ENCODE measurements at regions of chr7 and their contacts with region 1.

Region 1: DNA sequence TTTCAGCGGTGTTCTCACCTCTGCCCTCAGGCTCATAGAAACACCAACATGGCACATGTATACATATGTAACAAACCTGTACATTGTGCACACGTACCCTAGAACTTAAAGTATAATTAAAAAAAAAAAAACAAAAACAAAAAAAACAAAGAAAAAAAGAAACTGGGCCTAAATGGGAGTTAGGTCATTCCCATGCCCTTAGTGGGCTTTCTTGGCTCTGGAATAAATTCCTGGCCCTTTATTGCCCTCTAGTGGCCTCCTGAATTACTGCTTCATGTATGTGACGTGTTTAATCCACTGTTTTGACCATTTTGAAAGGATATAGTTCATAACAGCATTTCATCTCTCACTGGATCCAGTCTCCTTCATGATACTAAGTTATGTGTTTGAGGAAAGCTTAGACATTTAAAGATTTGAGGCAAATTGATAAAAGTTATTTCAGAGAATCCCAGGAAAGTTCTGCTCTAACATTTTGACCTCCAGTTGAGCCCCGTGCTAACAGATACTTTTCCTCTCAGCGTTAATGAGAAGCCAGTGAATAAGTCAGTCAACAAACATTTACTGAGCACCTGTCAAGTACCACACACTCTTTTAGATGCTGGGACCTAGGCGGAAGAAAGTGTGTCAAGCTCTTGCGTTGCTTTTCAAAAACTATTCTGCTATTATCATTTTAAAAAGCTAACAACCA is 54.7 kb upstream of the SYPL1 start:
- DNase-seq: no peak
- ATAC-seq: peak; percentile 77
- H3K4me3 ChIP-seq: no peak overlapping the region
- H3K27ac ChIP-seq: no peak overlapping the region
- H3K4me1 ChIP-seq: no peaks in the 10 kb centered on the region
- H3K27me3 ChIP-seq: no peaks in the 10 kb centered on the region
- CTCF ChIP-seq: peak; percentile 68 to 77 (median 72); a peak in 5 of 6 replicates
- EP300 ChIP-seq: no peak
- POLR2A ChIP-seq: no peak
- RAD21 ChIP-seq: peak; percentile 85

Region 2: DNA sequence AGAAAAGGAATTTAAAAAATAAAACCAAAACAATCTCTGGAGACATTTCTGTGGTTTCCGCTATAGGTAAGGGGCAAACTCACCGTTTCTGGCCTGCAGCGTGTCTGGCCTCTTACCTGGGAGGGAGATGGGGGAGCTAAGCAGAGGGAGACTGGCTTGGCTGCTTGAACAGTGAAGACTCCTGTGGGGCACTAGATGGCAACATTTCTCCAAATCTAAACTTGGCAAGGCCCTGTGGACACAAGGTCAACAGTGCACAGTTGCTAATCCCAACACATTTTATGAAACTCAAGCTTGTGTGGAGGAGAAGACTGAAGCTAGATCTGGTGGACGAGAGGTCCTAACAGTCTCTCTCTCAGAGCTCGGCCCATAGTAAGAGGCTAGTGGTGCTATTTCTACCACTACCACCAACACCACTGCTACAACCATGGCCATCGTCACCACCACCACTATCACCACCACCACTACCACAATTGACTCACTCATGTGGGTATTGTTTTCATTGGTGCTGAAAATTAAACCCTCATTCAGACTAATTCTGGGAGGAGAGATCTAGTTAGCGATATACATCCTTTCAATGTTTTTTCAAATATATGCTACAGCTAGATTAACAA is 232.1 kb before region 1 on chr7:
- CTCF ChIA-PET with region 1: no interaction called
- POLR2A ChIA-PET with region 1: no interaction called
- RAD21 ChIA-PET with region 1: no interaction called
- SMC1A ChIA-PET with region 1: no interaction called
- in situ Hi-C with region 1: no loop called
- intact Hi-C with region 1: loop called (anchors 1 kb)
- DNase-seq: no peak
- ATAC-seq: peak; percentile 62; the same call in 2 of the 3 replicates
- H3K4me3 ChIP-seq: no peak overlapping the region
- H3K27ac ChIP-seq: no peak overlapping the region
- H3K4me1 ChIP-seq: no peaks in the 10 kb centered on the region
- H3K27me3 ChIP-seq: no peaks in the 10 kb centered on the region; a peak in 1 of 4 replicates
- CTCF ChIP-seq: peak in 2 of 3 experiments; percentile 18 to 19; a peak in 2 of 6 replicates
- EP300 ChIP-seq: no peak
- POLR2A ChIP-seq: no peak
- RAD21 ChIP-seq: no peak

Region 3: DNA sequence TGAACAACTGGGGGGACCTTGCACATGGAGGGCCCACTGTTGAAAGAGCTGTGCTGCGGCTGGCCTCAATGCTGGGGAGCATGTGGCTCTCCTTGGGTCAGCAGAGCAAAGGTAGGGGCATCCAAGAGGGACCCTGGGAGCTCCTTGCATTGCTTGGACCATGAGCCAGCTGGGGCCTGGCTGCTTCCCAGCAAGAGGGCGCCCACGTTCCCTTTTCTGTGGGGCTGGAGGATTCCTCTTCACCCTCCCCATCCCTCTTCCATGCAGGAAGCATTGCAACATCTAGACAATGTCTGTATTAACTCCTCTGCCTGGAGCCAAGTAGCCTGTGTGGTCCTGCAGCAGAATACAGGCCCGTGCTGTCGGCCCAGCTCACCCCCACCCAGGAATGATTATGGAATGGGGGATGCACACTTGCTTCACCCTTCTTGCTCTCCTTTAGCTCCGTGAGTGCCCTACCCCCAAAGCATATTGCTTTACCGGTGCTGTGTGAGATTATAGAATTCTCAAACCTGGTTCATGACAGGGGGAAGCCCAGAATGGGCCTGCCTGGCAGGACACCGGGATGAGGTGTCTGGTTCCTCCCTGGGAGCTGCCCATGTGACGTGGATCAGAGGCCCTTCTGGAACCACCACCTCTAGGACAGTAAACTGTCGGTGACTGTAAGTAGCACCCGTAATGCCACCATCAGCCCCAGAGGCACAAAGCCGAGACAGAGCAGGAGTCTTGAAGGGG is 116.6 kb before region 1 on chr7:
- CTCF ChIA-PET with region 1: interaction called, 14 read pairs
- POLR2A ChIA-PET with region 1: interaction called, 3 read pairs
- RAD21 ChIA-PET with region 1: interaction called, 11 read pairs
- SMC1A ChIA-PET with region 1: interaction called, 26 read pairs
- in situ Hi-C with region 1: no loop called
- intact Hi-C with region 1: no loop called
- DNase-seq: no peak
- ATAC-seq: no peak
- H3K4me3 ChIP-seq: no peak overlapping the region
- H3K27ac ChIP-seq: no peak overlapping the region
- H3K4me1 ChIP-seq: no peaks in the 10 kb centered on the region
- H3K27me3 ChIP-seq: peaks cover 1 to 5% of the 10 kb centered on the region in 2 experiments; a peak in 2 of 4 replicates
- CTCF ChIP-seq: peak in 1 of 3 experiments; percentile 20; a peak in 2 of 6 replicates
- EP300 ChIP-seq: no peak
- POLR2A ChIP-seq: no peak
- RAD21 ChIP-seq: no peak

Region 4: GRCh38 chr7:106100863-106101629 is 65.8 kb before region 1 on chr7:
- CTCF ChIA-PET with region 1: no interaction called
- POLR2A ChIA-PET with region 1: no interaction called
- RAD21 ChIA-PET with region 1: no interaction called
- SMC1A ChIA-PET with region 1: no interaction called
- in situ Hi-C with region 1: no loop called
- intact Hi-C with region 1: no loop called
- DNase-seq: no peak
- ATAC-seq: peak; percentile 8; the same call in 1 of the 3 replicates
- H3K4me3 ChIP-seq: 0 out of 2 replicates have a peak overlapping the region, but pooled peaks have one; percentile 9
- H3K27ac ChIP-seq: no peak overlapping the region
- H3K4me1 ChIP-seq: peaks cover 16% of the 10 kb centered on the region
- H3K27me3 ChIP-seq: no peaks in the 10 kb centered on the region
- CTCF ChIP-seq: no peak
- EP300 ChIP-seq: no peak
- POLR2A ChIP-seq: no peak
- RAD21 ChIP-seq: no peak